Calu3 (cell line): ENCODE measurements at regions of chr10 and their contacts with region 1.

Region 1: DNA sequence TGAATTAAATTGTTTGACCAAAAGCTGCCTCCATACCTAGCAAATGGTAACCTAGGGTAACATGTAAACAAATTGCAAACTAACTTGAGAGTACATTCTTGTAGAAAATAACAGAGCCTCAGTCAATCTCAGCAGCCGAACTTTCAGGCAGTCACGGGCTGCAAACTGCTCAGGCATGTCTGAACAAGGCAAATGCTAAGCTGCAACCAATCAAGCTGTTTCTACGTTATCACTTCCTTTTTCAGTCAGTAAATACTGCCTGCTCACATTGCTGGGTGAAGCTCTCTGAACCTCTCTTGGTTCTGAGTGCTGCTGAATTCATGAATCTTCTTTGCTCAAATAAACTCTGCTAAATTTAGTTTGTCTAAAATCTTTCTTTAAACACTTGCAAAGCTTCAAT is 1212.4 kb downstream of the SORCS1 start:
- DNase-seq: no peak
- H3K4me3 Mint-ChIP-seq: no peak overlapping the region
- H3K27ac Mint-ChIP-seq: no peak overlapping the region
- H3K4me1 Mint-ChIP-seq: no peaks in the 10 kb centered on the region
- H3K27me3 Mint-ChIP-seq: no peaks in the 10 kb centered on the region
- CTCF ChIP-seq: no peak

Region 2: GRCh38 chr10:106175760-106176377 is 223.7 kb after region 1 on chr10:
- CTCF ChIA-PET with region 1: no interaction called
- intact Hi-C with region 1: loop called (anchors 2 kb)
- DNase-seq: no peak
- H3K4me3 Mint-ChIP-seq: no peak overlapping the region
- H3K27ac Mint-ChIP-seq: no peak overlapping the region
- H3K4me1 Mint-ChIP-seq: no peaks in the 10 kb centered on the region
- H3K27me3 Mint-ChIP-seq: no peaks in the 10 kb centered on the region
- CTCF ChIP-seq: no peak